Activated CD4-positive, alpha-beta memory T cell treated with anti-CD3 and anti-CD28 coated beads for 36 hours (primary cell): ENCODE measurements at regions of chr12 and their contacts with region 1.

Region 1: DNA sequence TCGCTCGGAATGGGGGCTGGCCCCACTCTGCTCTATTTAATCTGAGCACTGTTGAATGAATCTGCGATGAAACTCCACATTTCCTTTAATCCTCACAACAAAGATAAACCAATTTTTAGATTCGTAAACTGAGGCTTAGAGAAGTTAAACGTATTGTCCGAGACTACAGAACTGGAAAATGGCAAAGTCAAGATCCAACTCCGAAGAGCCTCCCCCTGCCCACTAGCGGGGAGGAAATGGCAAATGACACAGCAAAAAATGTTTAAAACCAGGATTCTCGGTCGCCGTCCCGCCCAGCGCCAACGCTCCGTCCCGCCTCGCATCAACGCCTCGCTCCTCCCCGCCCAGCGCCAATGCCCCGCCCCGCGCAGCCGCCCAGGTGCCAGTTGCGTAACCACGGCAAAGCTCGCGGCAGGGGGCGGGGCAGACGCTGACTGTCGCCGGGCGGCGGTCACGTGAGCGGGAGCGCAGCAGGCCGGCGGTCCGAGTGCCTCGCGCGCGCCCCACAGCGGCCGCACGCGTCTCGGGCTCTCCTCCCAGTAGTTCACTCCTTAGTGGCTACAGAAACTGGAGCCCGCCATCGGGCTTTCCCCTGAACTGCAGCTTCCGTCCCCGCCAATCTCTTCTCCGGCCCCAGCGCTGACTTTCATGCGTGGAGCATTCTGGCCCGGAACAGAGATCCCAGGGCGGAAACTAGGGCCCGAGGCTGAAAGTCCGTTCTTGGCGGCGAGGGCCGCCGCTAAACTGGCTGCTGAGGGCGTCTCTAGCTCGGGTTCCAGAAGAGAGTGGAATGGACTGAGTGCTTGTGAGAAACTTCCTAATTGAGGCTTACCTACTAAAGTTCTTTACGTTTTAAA is 13.6 kb upstream of the LRRC23 start:
- DNase-seq: peak; percentile 99
- H3K4me3 Mint-ChIP-seq: peak overlapping the region; percentile 84
- H3K27ac Mint-ChIP-seq: peak overlapping the region; percentile 97
- H3K4me1 Mint-ChIP-seq: peaks cover 17% of the 10 kb centered on the region
- H3K27me3 Mint-ChIP-seq: no peaks in the 10 kb centered on the region

Region 2: DNA sequence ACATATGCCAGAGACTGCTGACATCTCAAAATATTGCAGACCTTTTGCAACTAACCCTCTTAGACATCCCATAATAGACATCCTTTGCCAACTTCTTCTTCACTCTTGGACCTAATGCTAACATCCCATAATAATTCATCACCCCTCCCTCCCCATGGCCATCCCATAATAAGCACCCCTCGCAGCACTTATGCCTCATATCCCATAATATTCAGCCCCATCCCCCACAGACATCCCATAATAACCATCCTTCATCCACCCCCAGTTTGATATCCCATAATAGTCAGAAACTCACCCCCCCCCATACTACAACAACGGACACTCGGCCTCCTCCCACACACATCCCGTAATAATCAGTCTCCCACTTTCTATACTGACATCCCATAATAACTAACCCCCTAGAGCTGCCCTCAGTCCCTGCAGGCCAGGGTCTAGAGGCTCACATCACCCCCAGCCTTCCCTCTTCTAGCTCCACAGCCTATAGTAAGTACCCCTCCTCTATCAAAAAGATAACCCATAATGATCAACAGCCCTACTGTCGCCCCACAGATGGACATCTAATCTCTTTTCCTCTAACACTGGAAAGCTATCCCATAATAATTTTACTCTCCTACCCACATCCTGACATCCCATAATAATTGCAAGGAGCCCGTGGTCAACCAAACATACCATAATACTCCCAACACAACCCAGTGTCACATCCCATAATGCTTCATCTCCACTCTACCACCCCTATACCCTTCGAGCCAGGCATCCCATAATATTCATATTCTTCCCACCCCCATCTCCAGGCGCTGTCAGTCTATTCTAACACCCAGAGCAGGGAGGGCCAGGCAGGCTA is 283.0 kb before region 1 on chr12:
- CTCF ChIA-PET with region 1: no interaction called
- POLR2A ChIA-PET with region 1: no interaction called
- intact Hi-C with region 1: no loop called
- DNase-seq: peak; percentile 82
- H3K4me3 Mint-ChIP-seq: no peak overlapping the region
- H3K27ac Mint-ChIP-seq: no peak overlapping the region
- H3K4me1 Mint-ChIP-seq: peaks cover 53% of the 10 kb centered on the region
- H3K27me3 Mint-ChIP-seq: no peaks in the 10 kb centered on the region

Region 3: GRCh38 chr12:6867413-6868210 is 23.4 kb before region 1 on chr12 and contains the start of gene TPI1:
- CTCF ChIA-PET with region 1: interaction called, 53 read pairs
- POLR2A ChIA-PET with region 1: interaction called, 24 read pairs
- intact Hi-C with region 1: loop called (anchors 1 kb)
- DNase-seq: peak; percentile 88
- H3K4me3 Mint-ChIP-seq: peak within 1 kb of the TSS; percentile 98
- H3K27ac Mint-ChIP-seq: peak within 1 kb of the TSS; percentile 98
- H3K4me1 Mint-ChIP-seq: peaks cover 54% of the 10 kb centered on the region
- H3K27me3 Mint-ChIP-seq: no peaks in the 10 kb centered on the region
- total RNA-seq, gene TPI1: 1,432 to 1,495 TPM

Region 4: DNA sequence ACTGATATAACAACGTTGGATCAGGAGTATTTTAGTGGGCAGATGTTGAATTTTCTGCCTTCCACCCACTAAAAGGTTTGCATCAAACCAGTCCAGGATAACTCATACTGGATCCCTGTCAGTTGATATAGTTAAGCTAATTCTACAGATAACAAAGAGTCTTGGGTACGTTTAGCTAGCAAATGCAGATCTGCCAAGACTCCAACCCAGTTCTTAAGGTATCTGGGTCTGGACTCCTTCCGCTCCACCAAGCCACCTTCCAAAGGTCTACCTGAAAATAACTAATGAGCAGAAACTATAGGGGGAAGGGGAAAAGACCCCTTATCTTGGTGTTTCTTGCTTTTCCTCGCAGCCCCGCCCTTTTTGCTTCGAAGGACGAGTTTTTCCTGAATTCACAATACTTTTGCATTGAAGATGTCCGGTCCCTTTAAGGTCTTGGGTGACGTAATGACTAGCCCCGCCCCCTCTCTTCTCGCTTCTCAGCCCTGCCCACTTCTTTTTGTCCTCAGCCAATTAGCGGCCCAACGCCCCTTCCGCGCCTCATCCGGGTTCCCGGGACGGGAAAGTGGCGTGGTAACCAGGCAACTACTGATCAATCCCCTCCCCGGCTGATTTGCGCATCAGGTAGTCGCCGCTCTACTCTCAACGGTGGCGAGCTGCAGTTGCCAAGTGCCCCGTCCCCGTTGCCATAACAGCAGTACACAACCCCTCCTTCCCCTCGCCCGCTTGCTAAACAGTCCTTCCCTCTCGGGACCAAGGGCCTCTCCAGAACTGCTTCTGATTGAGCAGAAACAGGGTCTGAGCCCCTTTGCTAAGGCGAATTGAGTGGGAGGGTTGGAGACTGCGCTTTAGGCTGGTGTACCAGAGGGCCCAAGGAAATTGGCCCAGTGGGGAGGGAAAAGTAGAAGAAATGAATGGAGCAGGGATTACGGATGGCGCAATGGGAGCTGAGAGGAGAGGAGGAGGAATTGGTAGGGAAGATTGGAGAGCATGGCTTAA is 13.6 kb after region 1 on chr12 and contains the start of gene LRRC23:
- CTCF ChIA-PET with region 1: interaction called, 31 read pairs
- POLR2A ChIA-PET with region 1: interaction called, 5 read pairs
- intact Hi-C with region 1: loop called (anchors 1 kb)
- DNase-seq: peak; percentile 99
- H3K4me3 Mint-ChIP-seq: no peak within 1 kb of the TSS
- H3K27ac Mint-ChIP-seq: no peak within 1 kb of the TSS
- H3K4me1 Mint-ChIP-seq: peaks cover 5% of the 10 kb centered on the region
- H3K27me3 Mint-ChIP-seq: no peaks in the 10 kb centered on the region
- total RNA-seq, gene LRRC23: 6.8 to 7.8 TPM

Region 5: GRCh38 chr12:6914246-6914946 is 23.4 kb after region 1 on chr12 and contains the start of gene ENO2:
- CTCF ChIA-PET with region 1: interaction called, 31 read pairs
- POLR2A ChIA-PET with region 1: interaction called, 9 read pairs
- intact Hi-C with region 1: loop called (anchors 1 kb)
- DNase-seq: peak; percentile 88
- H3K4me3 Mint-ChIP-seq: peak within 1 kb of the TSS; percentile 92
- H3K27ac Mint-ChIP-seq: peak within 1 kb of the TSS; percentile 88
- H3K4me1 Mint-ChIP-seq: peaks cover 30% of the 10 kb centered on the region
- H3K27me3 Mint-ChIP-seq: no peaks in the 10 kb centered on the region
- total RNA-seq, gene ENO2: 185 to 193 TPM